ENCODE measurements at regions of chr2 and their contacts with region 1.

Region 1: GRCh38 chr2:136444323-136444722 is 321.0 kb upstream of the THSD7B start:
- DNase-seq: no peak
- ATAC-seq: no peak
- H3K4me3 ChIP-seq: no peak overlapping the region
- H3K4me3 Mint-ChIP-seq: no peak overlapping the region
- H3K27ac ChIP-seq: no peak overlapping the region
- H3K27ac Mint-ChIP-seq: no peak overlapping the region
- H3K4me1 ChIP-seq: no peaks in the 10 kb centered on the region
- H3K4me1 Mint-ChIP-seq: no peaks in the 10 kb centered on the region
- H3K27me3 ChIP-seq: peaks cover 0 to 3% of the 10 kb centered on the region in 2 experiments
- H3K27me3 Mint-ChIP-seq: peaks cover 14% of the 10 kb centered on the region
- CTCF ChIP-seq: no peak

Region 2: GRCh38 chr2:136468799-136469369 is 24.6 kb after region 1 on chr2:
- CTCF ChIA-PET with region 1: no interaction called
- POLR2A ChIA-PET with region 1: no interaction called
- intact Hi-C with region 1: loop called in 1 of 2 experiments (anchors 1 kb)
- DNase-seq: no peak
- ATAC-seq: no peak
- H3K4me3 ChIP-seq: no peak overlapping the region
- H3K4me3 Mint-ChIP-seq: no peak overlapping the region
- H3K27ac ChIP-seq: no peak overlapping the region
- H3K27ac Mint-ChIP-seq: no peak overlapping the region
- H3K4me1 ChIP-seq: no peaks in the 10 kb centered on the region
- H3K4me1 Mint-ChIP-seq: no peaks in the 10 kb centered on the region
- H3K27me3 ChIP-seq: no peaks in the 10 kb centered on the region
- H3K27me3 Mint-ChIP-seq: peaks cover 37% of the 10 kb centered on the region
- CTCF ChIP-seq: no peak